Sciatic nerve (tissue), 2 donors: ENCODE measurements at regions of chr9 and their contacts with region 1.

Region 1: DNA sequence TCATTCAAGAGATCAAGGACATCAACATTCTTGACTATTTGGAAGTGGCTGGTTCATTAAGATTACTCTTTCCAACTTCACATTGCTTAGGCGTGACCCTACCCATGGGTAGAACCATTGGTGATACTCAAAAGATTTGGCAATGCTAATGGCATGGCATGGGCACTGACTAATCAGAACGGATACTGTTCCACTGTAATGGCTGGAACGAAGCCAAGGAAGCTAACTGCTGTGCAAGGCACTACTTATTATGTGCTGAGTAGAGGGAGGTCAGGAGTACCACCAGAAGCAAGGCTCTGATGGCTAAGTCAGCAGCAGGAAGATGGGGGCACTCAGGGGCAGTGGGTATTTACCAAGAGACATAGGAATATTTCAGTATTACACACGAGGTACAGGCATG is 31.9 kb downstream of the GNA14 start:
- DNase-seq: no peak
- ATAC-seq: no peak

Region 2: GRCh38 chr9:77585335-77585786 is 30.8 kb before region 1 on chr9:
- intact Hi-C with region 1: loop called (anchors 2 kb)
- DNase-seq: no peak
- ATAC-seq: no peak

Region 3: GRCh38 chr9:77751341-77752091 is 135.3 kb after region 1 on chr9:
- intact Hi-C with region 1: no loop called
- DNase-seq: no peak
- ATAC-seq: peak; percentile 82